Breast epithelium (tissue), 4 donors: ENCODE measurements at regions of chr9 and their contacts with region 1.

Region 1: GRCh38 chr9:134059661-134060395 is 8.0 kb downstream of the BRD3 start:
- DNase-seq: peak in 1 of 2 donors; percentile 46
- H3K4me3 ChIP-seq: no peak overlapping the region
- H3K27ac ChIP-seq: no peak overlapping the region
- H3K4me1 ChIP-seq: peaks cover 29 to 43% of the 10 kb centered on the region in 2 donors
- H3K27me3 ChIP-seq: no peaks in the 10 kb centered on the region
- CTCF ChIP-seq: no peak
- POLR2A ChIP-seq: no peak

Region 2: GRCh38 chr9:132923346-132923902 is 1136.4 kb before region 1 on chr9:
- intact Hi-C with region 1: loop called (anchors 5 kb)
- DNase-seq: no peak
- H3K4me3 ChIP-seq: no peak overlapping the region
- H3K27ac ChIP-seq: no peak overlapping the region
- H3K4me1 ChIP-seq: no peaks in the 10 kb centered on the region
- H3K27me3 ChIP-seq: no peaks in the 10 kb centered on the region
- CTCF ChIP-seq: no peak
- POLR2A ChIP-seq: no peak

Region 3: DNA sequence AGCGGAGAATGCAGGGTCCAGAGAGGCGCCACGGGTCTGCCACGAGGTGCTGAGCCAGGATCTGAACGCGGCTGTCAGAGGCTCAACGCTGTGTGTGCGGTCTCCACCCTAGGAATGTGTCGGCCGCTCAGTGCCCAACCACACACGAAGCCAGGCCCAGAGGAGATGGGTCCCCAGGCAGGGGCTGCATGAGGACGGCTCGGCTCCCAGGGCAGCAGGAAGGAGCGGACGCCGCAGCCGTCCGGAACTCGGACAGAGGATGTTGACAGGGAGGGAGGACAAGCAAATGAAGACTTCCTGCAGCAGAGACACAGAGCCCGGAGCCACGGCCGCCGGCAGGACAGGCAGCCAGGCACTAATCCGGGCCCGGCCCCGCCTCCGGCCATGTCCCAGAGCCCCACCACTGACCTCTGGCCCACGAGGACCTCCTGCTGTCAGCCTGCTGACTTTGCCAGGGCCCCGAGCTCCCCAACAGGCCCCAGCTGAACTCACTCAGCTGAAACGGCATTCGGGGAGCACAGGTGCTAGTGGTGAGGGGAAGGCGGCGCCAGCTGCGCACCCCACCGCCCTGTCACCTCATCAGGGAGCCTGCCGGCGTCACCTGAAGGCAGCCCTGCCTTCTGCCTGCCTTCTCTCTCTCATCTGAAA is 80.4 kb before region 1 on chr9:
- intact Hi-C with region 1: no loop called
- DNase-seq: no peak
- H3K4me3 ChIP-seq: peak overlapping the region in 2 of 3 donors; percentile 14 to 52
- H3K27ac ChIP-seq: peak overlapping the region in 1 of 2 donors; percentile 40
- H3K4me1 ChIP-seq: no peaks in the 10 kb centered on the region
- H3K27me3 ChIP-seq: no peaks in the 10 kb centered on the region
- CTCF ChIP-seq: no peak
- POLR2A ChIP-seq: no peak

Region 4: GRCh38 chr9:134178768-134179551 is 119.1 kb after region 1 on chr9:
- intact Hi-C with region 1: no loop called
- DNase-seq: peak in 1 of 2 donors; percentile 59
- H3K4me3 ChIP-seq: no peak overlapping the region
- H3K27ac ChIP-seq: peak overlapping the region in 1 of 2 donors; percentile 72
- H3K4me1 ChIP-seq: peaks cover 0 to 7% of the 10 kb centered on the region in 2 donors
- H3K27me3 ChIP-seq: peaks cover 0 to 15% of the 10 kb centered on the region in 2 donors
- CTCF ChIP-seq: no peak
- POLR2A ChIP-seq: no peak